ENCODE measurements at regions of chr1 and their contacts with region 1.

Region 1: DNA sequence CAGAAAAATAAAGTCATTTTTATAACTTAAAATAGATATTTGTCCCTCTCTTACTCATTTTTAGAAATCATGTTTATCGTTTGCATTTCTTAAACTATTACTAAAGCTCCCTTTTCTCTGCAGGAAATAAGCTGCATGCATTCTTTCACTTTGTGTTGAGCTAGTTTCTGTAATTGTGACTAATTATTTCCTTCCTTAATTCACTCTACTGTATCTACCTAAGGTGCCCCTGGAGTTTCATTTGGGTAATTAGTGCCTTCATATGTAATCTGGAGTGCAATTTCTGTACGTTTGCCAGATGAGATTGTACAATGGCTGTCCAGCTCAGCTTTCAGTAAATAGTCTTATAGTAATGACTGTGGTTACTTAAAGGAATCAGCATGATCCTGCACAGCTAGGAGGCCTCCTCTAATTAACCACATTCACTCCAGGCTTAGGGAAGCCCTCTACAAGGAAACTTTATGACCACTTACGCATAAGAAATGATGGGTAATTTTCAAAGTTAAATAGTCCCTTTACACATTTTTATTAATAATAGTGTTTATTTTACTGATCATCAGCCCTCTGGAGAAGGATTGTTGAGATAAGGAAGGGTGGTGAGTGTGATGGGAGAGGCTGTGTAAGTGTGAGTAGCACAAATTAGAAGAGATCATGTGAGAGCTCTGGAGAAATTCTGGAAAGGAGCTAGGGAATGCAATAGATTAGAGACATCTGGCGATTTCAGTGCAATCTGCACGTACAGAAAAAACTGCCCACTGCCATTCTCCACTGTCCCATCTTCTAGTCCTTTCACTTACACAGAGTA is 86.8 kb downstream of the LRRC8C start:
- DNase-seq: peak; percentile 77
- H3K4me3 Mint-ChIP-seq: peak overlapping the region; percentile 74
- H3K27ac Mint-ChIP-seq: peak overlapping the region; percentile 98
- H3K4me1 Mint-ChIP-seq: peaks cover 66% of the 10 kb centered on the region
- H3K27me3 Mint-ChIP-seq: no peaks in the 10 kb centered on the region

Region 2: GRCh38 chr1:89524369-89525168 is 195.1 kb before region 1 on chr1 and contains the start of gene LRRC8B:
- intact Hi-C with region 1: loop called (anchors 2 kb)
- DNase-seq: peak; percentile 98
- H3K4me3 Mint-ChIP-seq: no peak within 1 kb of the TSS
- H3K27ac Mint-ChIP-seq: peak within 1 kb of the TSS; percentile 95
- H3K4me1 Mint-ChIP-seq: peaks cover 34% of the 10 kb centered on the region
- H3K27me3 Mint-ChIP-seq: no peaks in the 10 kb centered on the region
- total RNA-seq, gene LRRC8B: 74.5 and 76.8 TPM in 2 replicates

Region 3: GRCh38 chr1:89632657-89633247 is 87.0 kb before region 1 on chr1 and contains the start of gene LRRC8C:
- intact Hi-C with region 1: loop called (anchors 1 kb)
- DNase-seq: peak; percentile 97
- H3K4me3 Mint-ChIP-seq: peak within 1 kb of the TSS; percentile 96
- H3K27ac Mint-ChIP-seq: peak within 1 kb of the TSS; percentile 95
- H3K4me1 Mint-ChIP-seq: peaks cover 61% of the 10 kb centered on the region
- H3K27me3 Mint-ChIP-seq: no peaks in the 10 kb centered on the region
- total RNA-seq, gene LRRC8C: 73.1 and 74.0 TPM in 2 replicates

Region 4: DNA sequence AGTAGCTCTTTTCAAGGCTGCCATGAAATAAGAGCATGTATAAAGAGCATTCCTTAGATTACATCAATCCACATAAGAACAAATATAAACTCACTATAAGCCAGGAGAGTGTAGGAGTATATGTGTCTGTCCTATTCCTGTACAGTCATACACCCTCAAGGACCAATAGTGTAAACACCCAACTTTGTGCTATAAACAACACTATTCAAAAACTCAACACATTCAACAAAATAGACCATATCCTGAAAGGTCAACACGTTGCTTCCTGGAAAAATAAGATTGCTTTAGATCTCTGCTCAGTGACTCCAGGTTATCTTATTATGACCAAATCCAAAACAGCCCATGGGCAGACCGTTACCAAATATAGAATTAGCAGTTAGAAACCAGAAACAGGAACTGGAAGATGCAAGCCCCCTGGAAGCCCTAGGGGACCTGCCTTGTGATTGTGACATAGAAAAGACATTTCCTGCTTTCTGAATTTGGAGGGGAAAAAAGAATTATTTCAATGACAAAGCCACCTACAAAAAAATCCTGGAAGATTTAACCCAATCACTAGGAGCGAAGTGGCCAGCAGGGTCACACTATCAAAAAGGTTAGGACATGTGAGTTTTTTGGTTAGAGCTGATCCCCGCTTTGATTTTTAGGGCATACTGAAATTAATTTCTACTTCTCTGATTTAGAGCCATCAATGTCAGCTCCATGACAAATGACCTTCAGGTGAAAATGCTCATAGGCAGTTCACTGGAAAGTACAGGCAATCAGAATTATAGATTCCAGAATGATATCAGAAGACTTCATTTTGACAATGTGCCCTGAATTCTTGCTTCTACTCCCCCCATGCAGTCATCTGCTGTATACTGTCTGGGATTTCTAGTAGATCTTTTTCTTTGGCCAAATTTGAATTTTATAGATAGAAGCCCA is 26.8 kb before region 1 on chr1:
- intact Hi-C with region 1: loop called (anchors 1 kb)
- DNase-seq: no peak
- H3K4me3 Mint-ChIP-seq: peak overlapping the region; percentile 51
- H3K27ac Mint-ChIP-seq: peak overlapping the region; percentile 85
- H3K4me1 Mint-ChIP-seq: peaks cover 64% of the 10 kb centered on the region
- H3K27me3 Mint-ChIP-seq: no peaks in the 10 kb centered on the region

Region 5: GRCh38 chr1:89739013-89739843 is 19.5 kb after region 1 on chr1:
- intact Hi-C with region 1: loop called (anchors 1 kb)
- DNase-seq: peak; percentile 76
- H3K4me3 Mint-ChIP-seq: peak overlapping the region; percentile 78
- H3K27ac Mint-ChIP-seq: peak overlapping the region; percentile 94
- H3K4me1 Mint-ChIP-seq: peaks cover 40% of the 10 kb centered on the region
- H3K27me3 Mint-ChIP-seq: no peaks in the 10 kb centered on the region

Region 6: DNA sequence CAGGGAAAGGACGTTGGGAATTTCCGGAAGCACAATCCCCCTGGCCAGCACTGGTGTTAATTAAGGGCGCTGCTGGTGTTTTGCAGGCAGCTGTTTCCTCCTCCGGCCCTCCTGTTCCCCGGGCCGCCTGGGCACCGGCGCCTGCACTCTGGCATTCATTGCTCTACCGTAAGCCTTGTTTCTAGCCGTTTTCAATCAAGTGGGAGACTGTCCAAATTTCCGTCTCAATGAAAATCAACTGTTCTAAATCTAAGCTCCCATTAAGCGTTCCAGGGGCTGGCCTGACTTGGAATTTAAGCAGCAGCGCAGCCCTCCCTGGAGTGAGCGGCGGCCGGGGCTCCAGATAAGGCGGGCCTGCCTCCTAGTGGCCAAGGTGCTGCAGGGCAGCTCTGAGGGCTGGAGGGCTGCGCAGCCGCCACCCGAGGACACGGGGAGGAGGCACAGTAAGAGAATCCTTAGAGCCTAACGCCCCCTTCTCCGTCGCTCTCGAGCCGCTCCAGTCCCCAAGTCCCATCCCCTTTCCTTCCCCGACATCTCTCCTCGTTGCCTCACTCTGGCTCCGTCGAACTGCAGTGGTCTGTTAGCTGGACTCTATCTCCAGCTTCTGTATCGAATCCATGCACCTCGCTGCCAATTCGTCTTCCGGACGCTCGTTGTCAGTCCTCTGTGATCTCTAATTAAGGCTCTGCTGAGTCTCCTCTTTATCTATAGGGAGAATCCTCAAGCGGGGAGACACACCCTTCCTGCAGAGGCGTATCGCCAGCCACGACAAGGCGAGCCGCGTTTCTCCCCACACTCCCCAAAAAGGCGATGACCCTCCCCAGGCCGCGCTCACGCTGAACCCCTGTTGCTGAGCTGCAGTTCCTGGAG is 43.3 kb after region 1 on chr1:
- intact Hi-C with region 1: loop called (anchors 1 kb)
- DNase-seq: peak; percentile 96
- H3K4me3 Mint-ChIP-seq: peak overlapping the region; percentile 91
- H3K27ac Mint-ChIP-seq: peak overlapping the region; percentile 96
- H3K4me1 Mint-ChIP-seq: peaks cover 53% of the 10 kb centered on the region
- H3K27me3 Mint-ChIP-seq: no peaks in the 10 kb centered on the region

Region 7: GRCh38 chr1:89884718-89885596 is 165.3 kb after region 1 on chr1:
- intact Hi-C with region 1: no loop called
- DNase-seq: no peak
- H3K4me3 Mint-ChIP-seq: no peak overlapping the region
- H3K27ac Mint-ChIP-seq: no peak overlapping the region
- H3K4me1 Mint-ChIP-seq: peaks cover 13% of the 10 kb centered on the region
- H3K27me3 Mint-ChIP-seq: no peaks in the 10 kb centered on the region

Measured in activated CD4-positive, alpha-beta T cell treated with anti-CD3 and anti-CD28 coated beads, Interleukin-2, amount 10 ng/mL, durations not matched to agents 24 days and 14 days (primary cell).